SK-N-SH (cell line): ENCODE measurements at regions of chr9 and their contacts with region 1.

Region 1: GRCh38 chr9:124415102-124415851 is at the start of gene PSMB7:
- DNase-seq: peak; percentile 92
- H3K4me3 ChIP-seq: peak within 1 kb of the TSS; percentile 94 to 99
- H3K27ac ChIP-seq: peak within 1 kb of the TSS; percentile 56 to 76
- H3K4me1 ChIP-seq: peaks cover 11 to 37% of the 10 kb centered on the region in 2 experiments
- H3K27me3 ChIP-seq: no peaks in the 10 kb centered on the region
- CTCF ChIP-seq: peak; percentile 82
- EP300 ChIP-seq: peak in 1 of 2 experiments; percentile 37; a peak in 1 of 4 replicates
- RAD21 ChIP-seq: no peak
- polyA plus RNA-seq, gene PSMB7: 357 and 484 TPM in 2 replicates

Region 2: DNA sequence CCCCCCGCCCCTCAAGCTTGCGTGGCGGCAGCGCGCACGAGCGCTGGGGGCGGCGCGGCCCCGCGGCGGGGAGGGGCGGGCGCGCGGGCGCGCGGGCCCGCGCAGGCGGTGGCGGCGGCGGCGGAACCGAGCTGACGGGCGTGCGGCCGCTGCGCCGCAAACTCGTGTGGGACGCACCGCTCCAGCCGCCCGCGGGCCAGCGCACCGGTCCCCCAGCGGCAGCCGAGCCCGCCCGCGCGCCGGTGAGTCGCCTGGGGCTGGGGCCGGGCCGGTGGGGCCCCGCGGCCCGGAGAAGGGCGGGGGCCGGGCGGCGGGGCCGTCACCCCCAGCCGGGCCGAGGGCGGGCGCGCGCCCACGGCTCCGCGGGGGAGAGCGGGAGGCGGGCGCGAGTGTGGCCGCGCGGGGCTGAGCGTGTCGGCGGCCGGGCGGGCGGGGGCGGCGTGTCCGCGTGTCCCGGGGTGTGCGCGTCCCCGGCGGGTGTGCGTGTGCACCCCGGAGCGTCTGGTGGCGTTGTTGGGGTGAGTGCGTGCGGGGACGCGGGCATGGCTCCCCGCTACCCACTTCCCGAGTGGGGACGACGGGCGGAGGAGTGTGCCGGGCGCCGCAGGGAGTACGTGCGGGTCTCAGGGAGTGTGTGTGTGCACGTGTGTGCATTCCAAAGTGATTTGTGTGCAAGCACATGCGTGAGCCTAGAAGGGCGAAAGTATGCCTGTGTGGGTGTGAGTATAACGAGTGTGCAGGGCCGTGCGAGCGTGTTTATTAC is 157.3 kb before region 1 on chr9 and contains the start of gene NEK6:
- CTCF ChIA-PET with region 1: no interaction called
- POLR2A ChIA-PET with region 1: no interaction called
- DNase-seq: peak; percentile 84
- H3K4me3 ChIP-seq: peak within 1 kb of the TSS; percentile 60 to 76
- H3K27ac ChIP-seq: peak within 1 kb of the TSS; percentile 85 to 92
- H3K4me1 ChIP-seq: peaks cover 10 to 34% of the 10 kb centered on the region in 2 experiments
- H3K27me3 ChIP-seq: no peaks in the 10 kb centered on the region
- CTCF ChIP-seq: no peak
- EP300 ChIP-seq: no peak
- RAD21 ChIP-seq: no peak
- polyA plus RNA-seq, gene NEK6: 89.8 and 96.1 TPM in 2 replicates

Region 3: GRCh38 chr9:124309665-124310064 is 105.6 kb before region 1 on chr9:
- CTCF ChIA-PET with region 1: no interaction called
- POLR2A ChIA-PET with region 1: no interaction called
- DNase-seq: no peak
- H3K4me3 ChIP-seq: no peak overlapping the region
- H3K27ac ChIP-seq: peak overlapping the region in 1 of 2 experiments; percentile 61; a peak in 2 of 4 replicates
- H3K4me1 ChIP-seq: peaks cover 0 to 23% of the 10 kb centered on the region in 2 experiments; a peak in 2 of 4 replicates
- H3K27me3 ChIP-seq: no peaks in the 10 kb centered on the region
- CTCF ChIP-seq: no peak
- EP300 ChIP-seq: peak in 1 of 2 experiments; percentile 83; a peak in 2 of 4 replicates
- RAD21 ChIP-seq: no peak

Region 4: GRCh38 chr9:124392871-124393460 is 22.3 kb before region 1 on chr9:
- CTCF ChIA-PET with region 1: interaction called, 87 read pairs
- POLR2A ChIA-PET with region 1: no interaction called
- DNase-seq: peak; percentile 77
- H3K4me3 ChIP-seq: peak overlapping the region in 1 of 2 experiments; percentile 28; a peak in 2 of 4 replicates
- H3K27ac ChIP-seq: peak overlapping the region; percentile 76 to 90
- H3K4me1 ChIP-seq: peaks cover 42 to 51% of the 10 kb centered on the region in 2 experiments
- H3K27me3 ChIP-seq: no peaks in the 10 kb centered on the region
- CTCF ChIP-seq: peak; percentile 69
- EP300 ChIP-seq: peak; percentile 41 to 96
- RAD21 ChIP-seq: peak; percentile 72

Region 5: DNA sequence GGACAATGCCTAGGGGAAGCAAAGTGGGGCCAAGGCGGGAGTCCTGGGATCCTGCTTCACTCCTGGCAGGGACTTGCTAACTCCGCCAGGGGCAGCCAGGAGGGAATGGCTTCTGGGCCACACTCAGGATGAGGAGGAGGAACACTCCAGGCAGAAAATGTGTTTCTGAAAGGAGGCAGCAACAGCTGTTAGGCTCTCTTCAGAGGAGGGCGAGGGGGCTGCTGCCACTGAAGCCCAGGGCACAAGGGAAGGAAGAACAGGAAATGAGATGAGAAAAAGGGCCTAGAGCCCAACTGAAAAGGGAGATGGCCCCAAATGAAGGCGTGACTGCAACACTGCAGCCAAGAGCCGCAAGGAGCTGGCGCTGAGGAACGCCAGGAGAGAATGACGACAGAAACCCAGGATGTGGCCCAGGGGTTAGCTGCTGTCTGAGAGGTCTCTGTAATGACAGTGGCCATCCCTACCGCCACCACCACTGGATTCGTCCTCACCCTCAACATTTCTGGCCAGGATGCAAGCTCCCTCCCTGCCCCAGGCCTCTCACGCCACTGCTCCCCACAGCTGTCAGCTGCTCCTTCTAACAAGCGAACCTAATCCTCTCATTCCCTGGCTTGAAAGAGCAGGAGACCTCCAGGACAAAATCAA is 15.8 kb before region 1 on chr9:
- CTCF ChIA-PET with region 1: interaction called, 87 read pairs
- POLR2A ChIA-PET with region 1: no interaction called
- DNase-seq: no peak
- H3K4me3 ChIP-seq: no peak overlapping the region
- H3K27ac ChIP-seq: no peak overlapping the region
- H3K4me1 ChIP-seq: peaks cover 0 to 7% of the 10 kb centered on the region in 2 experiments; a peak in 2 of 4 replicates
- H3K27me3 ChIP-seq: no peaks in the 10 kb centered on the region
- CTCF ChIP-seq: no peak
- EP300 ChIP-seq: no peak
- RAD21 ChIP-seq: no peak

Region 6: GRCh38 chr9:124428751-124429529 is 13.7 kb after region 1 on chr9:
- CTCF ChIA-PET with region 1: interaction called, 14 read pairs
- POLR2A ChIA-PET with region 1: no interaction called
- DNase-seq: no peak
- H3K4me3 ChIP-seq: no peak overlapping the region
- H3K27ac ChIP-seq: no peak overlapping the region
- H3K4me1 ChIP-seq: peaks cover 0 to 6% of the 10 kb centered on the region in 2 experiments; a peak in 1 of 4 replicates
- H3K27me3 ChIP-seq: no peaks in the 10 kb centered on the region
- CTCF ChIP-seq: no peak
- EP300 ChIP-seq: no peak
- RAD21 ChIP-seq: no peak

Region 7: DNA sequence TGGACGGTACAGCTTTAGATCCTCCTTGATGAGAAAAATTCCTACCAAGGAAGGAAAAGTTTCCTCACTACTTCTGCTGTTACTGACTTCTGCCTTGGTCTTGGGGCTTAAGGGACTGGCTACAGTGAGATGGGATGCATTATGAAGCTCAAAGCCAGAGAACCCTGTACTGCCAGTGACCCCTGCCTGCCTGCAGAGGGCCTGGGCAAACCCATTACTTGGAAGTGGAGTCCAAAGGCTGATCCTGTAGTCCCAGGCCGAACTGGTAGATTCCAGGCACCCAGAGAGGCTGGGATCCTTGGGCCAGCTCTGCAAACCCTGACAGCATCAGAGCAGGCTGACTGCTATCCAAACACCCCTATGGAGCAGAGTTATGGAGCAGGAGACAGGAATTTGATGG is 117.6 kb after region 1 on chr9:
- CTCF ChIA-PET with region 1: interaction called, 173 read pairs
- POLR2A ChIA-PET with region 1: interaction called, 3 read pairs
- DNase-seq: no peak
- H3K4me3 ChIP-seq: no peak overlapping the region
- H3K27ac ChIP-seq: no peak overlapping the region
- H3K4me1 ChIP-seq: peaks cover 0 to 10% of the 10 kb centered on the region in 2 experiments; a peak in 1 of 4 replicates
- H3K27me3 ChIP-seq: no peaks in the 10 kb centered on the region
- CTCF ChIP-seq: no peak
- EP300 ChIP-seq: no peak
- RAD21 ChIP-seq: no peak

Region 8: DNA sequence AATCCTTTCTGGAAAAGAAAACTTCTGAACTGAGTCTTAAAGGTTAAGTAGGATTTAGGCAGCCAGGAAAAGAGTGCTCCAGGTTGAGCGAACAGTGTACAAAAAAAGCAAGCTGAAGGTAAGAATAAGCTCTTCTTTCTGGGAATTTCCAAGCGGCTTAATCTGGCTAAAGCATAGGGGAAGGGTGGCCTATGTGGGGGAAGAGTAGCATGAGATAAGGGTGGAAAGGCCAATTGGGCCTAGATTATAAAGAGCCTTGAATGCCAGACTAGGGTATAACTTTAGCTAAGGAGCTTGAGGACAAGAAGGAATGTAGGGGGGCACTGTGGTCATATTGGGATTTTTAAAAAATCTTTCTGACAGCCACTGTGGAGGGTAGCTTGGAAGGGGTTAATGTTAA is 129.3 kb after region 1 on chr9:
- CTCF ChIA-PET with region 1: interaction called, 173 read pairs
- POLR2A ChIA-PET with region 1: no interaction called
- DNase-seq: no peak
- H3K4me3 ChIP-seq: no peak overlapping the region
- H3K27ac ChIP-seq: no peak overlapping the region
- H3K4me1 ChIP-seq: no peaks in the 10 kb centered on the region
- H3K27me3 ChIP-seq: no peaks in the 10 kb centered on the region
- CTCF ChIP-seq: no peak
- EP300 ChIP-seq: no peak
- RAD21 ChIP-seq: no peak

Region 9: GRCh38 chr9:124733964-124734740 is 318.9 kb after region 1 on chr9:
- CTCF ChIA-PET with region 1: no interaction called
- POLR2A ChIA-PET with region 1: no interaction called
- DNase-seq: no peak
- H3K4me3 ChIP-seq: no peak overlapping the region
- H3K27ac ChIP-seq: peak overlapping the region in 1 of 2 experiments; percentile 65; a peak in 2 of 4 replicates
- H3K4me1 ChIP-seq: peaks cover 0 to 19% of the 10 kb centered on the region in 2 experiments; a peak in 1 of 4 replicates
- H3K27me3 ChIP-seq: no peaks in the 10 kb centered on the region
- CTCF ChIP-seq: no peak
- EP300 ChIP-seq: no peak
- RAD21 ChIP-seq: no peak